ENCODE measurements at regions of chr2 and their contacts with region 1.

Region 1: GRCh38 chr2:12728221-12728777 is 11.6 kb downstream of the TRIB2 start:
- DNase-seq: no peak
- ATAC-seq: no peak

Region 2: DNA sequence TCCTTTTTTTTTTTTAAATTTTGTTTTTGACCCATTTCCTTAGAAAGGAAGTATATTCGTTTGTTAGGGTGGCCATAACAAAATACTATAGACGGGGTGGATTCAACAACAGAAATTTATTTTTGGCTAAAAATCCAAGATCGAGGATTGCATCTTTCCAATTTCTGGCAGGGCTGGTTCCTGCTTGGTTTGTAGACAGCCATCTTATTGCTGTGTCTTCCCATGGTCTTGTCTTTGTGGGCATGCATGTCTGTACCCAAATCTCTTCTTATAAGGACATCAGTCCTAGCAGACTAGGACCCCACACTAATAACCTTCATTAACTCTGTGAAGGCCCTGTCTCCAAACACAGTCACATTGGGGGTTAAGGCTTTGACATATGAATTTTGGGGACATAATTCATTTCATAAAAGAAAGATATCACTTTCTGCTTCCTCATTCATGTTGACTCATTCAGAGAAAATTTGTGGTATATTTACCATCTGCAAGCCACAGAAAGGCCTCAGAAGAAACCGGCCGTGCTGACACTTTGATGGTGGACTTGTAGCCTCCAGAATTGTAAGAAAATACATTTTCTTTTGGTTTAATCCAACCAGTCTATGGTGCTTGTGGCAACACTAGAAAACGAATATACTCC is 719.8 kb before region 1 on chr2:
- intact Hi-C with region 1: no loop called
- DNase-seq: no peak
- ATAC-seq: no peak

Region 3: DNA sequence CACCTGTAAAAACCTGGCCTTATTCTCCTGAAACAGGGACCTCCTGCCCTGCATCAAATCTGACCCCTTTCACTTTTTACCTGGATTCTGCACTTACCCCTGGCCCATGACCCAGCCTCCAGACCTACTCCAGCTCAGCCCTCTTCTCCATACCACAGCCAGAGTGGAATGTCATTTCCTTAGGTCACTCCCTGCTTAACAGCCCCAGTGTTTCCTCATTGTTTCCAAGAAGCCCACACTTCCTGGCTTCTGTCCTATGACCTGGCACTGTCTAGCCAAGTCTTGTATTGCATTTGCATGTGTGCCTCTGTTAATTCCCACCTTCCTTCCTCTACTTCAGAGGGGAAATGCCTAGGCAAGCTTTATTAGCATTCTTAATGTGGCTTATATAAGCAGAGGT is 63.0 kb before region 1 on chr2:
- intact Hi-C with region 1: no loop called
- DNase-seq: no peak
- ATAC-seq: peak; percentile 71

Region 4: DNA sequence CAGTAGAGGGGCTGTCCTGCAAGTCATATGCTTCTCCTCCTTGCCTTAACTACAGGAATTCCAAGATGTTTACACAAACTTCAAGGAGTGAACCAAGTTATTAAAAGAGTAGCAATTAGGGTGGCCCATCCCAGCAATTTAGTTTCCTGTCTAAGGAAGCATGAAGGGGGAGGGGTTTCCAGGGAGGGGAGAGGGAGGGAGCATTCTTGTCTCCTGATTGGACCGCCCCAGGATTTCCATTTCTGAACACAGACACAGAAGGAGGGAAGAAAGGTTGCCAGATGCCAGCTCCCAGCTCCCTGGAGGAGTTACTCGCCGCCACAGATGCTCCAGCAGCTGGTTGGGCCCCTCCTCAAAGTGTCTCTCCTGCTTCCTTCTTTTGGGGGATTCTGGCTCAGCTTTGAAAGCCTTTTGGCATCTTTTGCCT is 96.1 kb after region 1 on chr2:
- intact Hi-C with region 1: loop called (anchors 10 kb)
- DNase-seq: peak; percentile 35
- ATAC-seq: peak; percentile 55

Region 5: GRCh38 chr2:13143451-13143850 is 415.2 kb after region 1 on chr2:
- intact Hi-C with region 1: no loop called
- DNase-seq: no peak
- ATAC-seq: no peak